HEK293 (cell line): ENCODE measurements at regions of chr2 and their contacts with region 1.

Region 1: GRCh38 chr2:135797497-135798274 is 39.3 kb downstream of the LCT start:
- H3K4me3 ChIP-seq: no peak overlapping the region
- H3K27ac ChIP-seq: no peak overlapping the region
- H3K4me1 ChIP-seq: no peaks in the 10 kb centered on the region
- CTCF ChIP-seq: peak; percentile 74

Region 2: DNA sequence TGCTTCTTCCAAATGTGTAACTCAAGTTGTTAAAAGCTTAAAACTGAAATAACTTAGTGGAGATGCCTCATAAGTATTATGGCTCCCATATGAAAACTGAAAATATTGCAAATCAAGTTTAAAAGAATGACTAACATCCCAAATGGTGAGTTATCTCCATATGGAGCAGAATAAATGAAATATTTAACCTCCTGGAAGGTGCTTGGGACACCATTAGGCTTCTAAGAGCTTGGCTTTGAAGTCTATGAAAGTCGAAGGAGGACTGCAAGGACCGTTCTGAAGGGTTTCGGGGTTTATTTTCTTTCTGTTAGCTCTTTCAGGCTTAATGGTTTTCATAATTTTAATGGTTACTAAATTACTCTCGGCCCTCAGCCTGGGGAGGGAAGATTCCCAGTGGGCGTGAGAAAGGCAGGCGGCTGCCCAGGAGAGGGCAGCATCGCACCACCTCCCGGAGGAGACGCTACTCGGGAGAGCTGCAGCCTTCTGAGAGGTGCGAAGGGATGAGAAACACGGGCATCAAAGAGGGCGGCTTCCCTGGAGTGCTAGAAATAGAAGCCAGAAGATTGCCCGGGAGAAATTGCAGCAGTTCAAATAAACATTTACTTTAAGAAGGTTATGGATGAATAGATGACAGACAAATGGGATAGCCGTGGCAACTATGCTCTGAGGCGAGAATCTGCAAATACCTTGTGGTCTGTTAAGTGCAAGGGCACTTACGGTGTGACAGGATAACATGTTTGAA is 793.5 kb before region 1 on chr2:
- CTCF ChIA-PET with region 1: interaction called, 12 read pairs
- POLR2A ChIA-PET with region 1: no interaction called
- H3K4me3 ChIP-seq: no peak overlapping the region
- H3K27ac ChIP-seq: no peak overlapping the region
- H3K4me1 ChIP-seq: no peaks in the 10 kb centered on the region
- CTCF ChIP-seq: peak; percentile 82

Region 3: DNA sequence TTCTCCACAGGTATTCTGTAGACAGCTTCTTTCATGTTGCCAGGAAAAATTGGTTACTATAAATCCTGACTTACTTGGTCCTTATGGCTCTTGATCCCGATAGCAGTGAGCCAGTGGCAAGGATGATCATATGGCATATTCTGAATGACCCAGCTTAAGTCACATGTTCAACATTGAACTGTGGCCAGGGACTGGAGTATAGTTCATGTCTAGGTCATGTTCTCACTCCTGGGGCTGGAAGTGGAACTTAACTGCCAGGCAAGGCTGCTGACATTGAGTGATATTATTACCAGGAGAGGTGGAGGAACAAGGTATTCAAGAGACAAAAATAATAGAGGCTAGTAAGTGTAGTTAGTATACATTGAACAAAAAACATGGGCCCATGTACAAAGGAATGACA is 240.2 kb before region 1 on chr2:
- CTCF ChIA-PET with region 1: no interaction called
- POLR2A ChIA-PET with region 1: no interaction called
- H3K4me3 ChIP-seq: no peak overlapping the region
- H3K27ac ChIP-seq: no peak overlapping the region
- H3K4me1 ChIP-seq: no peaks in the 10 kb centered on the region
- CTCF ChIP-seq: no peak

Region 4: GRCh38 chr2:135768863-135769262 is 28.8 kb before region 1 on chr2:
- CTCF ChIA-PET with region 1: interaction called, 13 read pairs
- POLR2A ChIA-PET with region 1: interaction called, 6 read pairs
- H3K4me3 ChIP-seq: no peak overlapping the region
- H3K27ac ChIP-seq: no peak overlapping the region
- H3K4me1 ChIP-seq: no peaks in the 10 kb centered on the region
- CTCF ChIP-seq: no peak

Region 5: GRCh38 chr2:135815269-135815668 is 17.6 kb after region 1 on chr2:
- CTCF ChIA-PET with region 1: interaction called, 11 read pairs
- POLR2A ChIA-PET with region 1: no interaction called
- H3K4me3 ChIP-seq: no peak overlapping the region
- H3K27ac ChIP-seq: no peak overlapping the region
- H3K4me1 ChIP-seq: no peaks in the 10 kb centered on the region
- CTCF ChIP-seq: no peak